SK-N-SH (cell line): ENCODE measurements at regions of chr5 and their contacts with region 1.

Region 1: DNA sequence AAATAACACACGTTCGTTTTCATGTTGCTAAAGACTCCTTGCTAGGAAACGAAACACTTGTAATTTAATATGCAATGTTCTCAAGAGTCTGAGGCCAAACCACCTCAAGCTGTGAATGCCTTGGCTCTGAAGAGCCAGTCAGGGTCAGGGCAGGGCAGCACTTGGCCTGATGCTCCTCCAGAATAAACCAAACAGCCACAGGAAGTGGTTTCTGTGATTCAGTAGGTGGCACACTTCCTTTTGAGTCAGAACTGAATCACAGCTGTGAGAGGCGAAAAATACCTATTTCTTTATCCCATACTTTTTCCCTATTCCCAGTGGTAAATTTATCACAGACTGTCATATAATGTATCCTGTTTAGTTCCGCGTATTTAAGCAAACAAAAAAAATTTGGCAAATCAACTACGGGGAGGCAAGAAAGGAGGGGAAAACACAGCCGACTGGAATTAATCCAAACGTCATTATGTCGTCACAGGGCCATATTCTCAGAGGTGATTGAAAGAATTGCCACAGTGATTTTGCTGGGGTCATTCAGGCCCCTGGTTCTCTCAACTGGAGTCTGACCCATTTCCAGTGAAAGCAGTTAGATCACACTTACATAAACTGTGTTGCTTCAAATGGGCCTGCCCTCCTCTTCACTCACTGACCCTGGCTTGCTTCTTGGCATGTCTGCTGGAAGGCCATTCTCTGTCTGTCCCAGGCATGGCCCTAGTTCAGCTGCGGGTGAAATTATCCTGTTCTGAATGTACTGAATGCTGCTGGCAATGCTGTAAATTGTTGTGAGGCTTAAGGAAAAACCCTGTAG is 71.2 kb downstream of the ARRDC3 start:
- DNase-seq: peak; percentile 27
- H3K4me3 ChIP-seq: peak overlapping the region in 1 of 2 experiments; percentile 13; a peak in 1 of 4 replicates
- H3K27ac ChIP-seq: peak overlapping the region; percentile 81 to 99
- H3K4me1 ChIP-seq: peaks cover 28 to 31% of the 10 kb centered on the region in 2 experiments; a peak in 3 of 4 replicates
- H3K27me3 ChIP-seq: no peaks in the 10 kb centered on the region
- CTCF ChIP-seq: no peak
- EP300 ChIP-seq: peak; percentile 59 to 99
- RAD21 ChIP-seq: peak; percentile 45

Region 2: DNA sequence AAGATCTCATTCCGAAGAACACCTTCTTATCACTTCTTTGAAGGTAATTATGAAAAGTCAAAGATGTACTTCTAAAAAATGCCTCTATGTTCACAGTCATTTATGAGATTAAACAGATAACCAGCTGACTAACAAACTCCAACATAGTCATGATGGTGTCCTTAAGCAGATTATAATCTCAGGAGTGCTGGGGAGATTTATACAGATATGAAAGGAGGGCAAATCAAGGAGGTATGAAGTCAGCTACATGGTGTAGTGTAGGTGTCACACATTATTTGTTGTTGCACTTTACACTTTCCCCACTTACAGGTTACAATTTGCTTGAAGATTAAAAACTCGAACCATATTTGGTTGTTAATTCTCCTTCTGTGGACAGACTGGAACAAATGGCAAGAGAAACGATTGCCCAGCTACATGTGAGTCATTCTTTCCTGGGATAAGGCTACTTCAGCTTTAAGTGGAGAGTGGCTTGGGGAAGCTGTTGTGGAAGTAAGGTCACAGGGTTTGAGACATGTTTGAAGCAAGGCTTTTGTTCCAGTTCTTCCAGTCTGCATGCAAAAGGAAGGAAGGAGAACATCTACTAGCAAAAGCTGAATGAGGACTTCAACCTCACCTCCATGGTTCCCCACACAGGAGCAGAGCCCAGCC is 433.2 kb before region 1 on chr5:
- CTCF ChIA-PET with region 1: no interaction called
- POLR2A ChIA-PET with region 1: no interaction called
- DNase-seq: no peak
- H3K4me3 ChIP-seq: no peak overlapping the region
- H3K27ac ChIP-seq: no peak overlapping the region
- H3K4me1 ChIP-seq: no peaks in the 10 kb centered on the region
- H3K27me3 ChIP-seq: 0 out of 2 replicates have a peak, but pooled peaks cover 5% of the 10 kb centered on the region
- CTCF ChIP-seq: no peak
- EP300 ChIP-seq: no peak
- RAD21 ChIP-seq: no peak

Region 3: GRCh38 chr5:91016954-91017700 is 294.8 kb before region 1 on chr5:
- CTCF ChIA-PET with region 1: no interaction called
- POLR2A ChIA-PET with region 1: no interaction called
- DNase-seq: no peak
- H3K4me3 ChIP-seq: no peak overlapping the region
- H3K27ac ChIP-seq: no peak overlapping the region
- H3K4me1 ChIP-seq: no peaks in the 10 kb centered on the region; a peak in 2 of 4 replicates
- H3K27me3 ChIP-seq: no peaks in the 10 kb centered on the region
- CTCF ChIP-seq: no peak
- EP300 ChIP-seq: no peak
- RAD21 ChIP-seq: no peak

Region 4: DNA sequence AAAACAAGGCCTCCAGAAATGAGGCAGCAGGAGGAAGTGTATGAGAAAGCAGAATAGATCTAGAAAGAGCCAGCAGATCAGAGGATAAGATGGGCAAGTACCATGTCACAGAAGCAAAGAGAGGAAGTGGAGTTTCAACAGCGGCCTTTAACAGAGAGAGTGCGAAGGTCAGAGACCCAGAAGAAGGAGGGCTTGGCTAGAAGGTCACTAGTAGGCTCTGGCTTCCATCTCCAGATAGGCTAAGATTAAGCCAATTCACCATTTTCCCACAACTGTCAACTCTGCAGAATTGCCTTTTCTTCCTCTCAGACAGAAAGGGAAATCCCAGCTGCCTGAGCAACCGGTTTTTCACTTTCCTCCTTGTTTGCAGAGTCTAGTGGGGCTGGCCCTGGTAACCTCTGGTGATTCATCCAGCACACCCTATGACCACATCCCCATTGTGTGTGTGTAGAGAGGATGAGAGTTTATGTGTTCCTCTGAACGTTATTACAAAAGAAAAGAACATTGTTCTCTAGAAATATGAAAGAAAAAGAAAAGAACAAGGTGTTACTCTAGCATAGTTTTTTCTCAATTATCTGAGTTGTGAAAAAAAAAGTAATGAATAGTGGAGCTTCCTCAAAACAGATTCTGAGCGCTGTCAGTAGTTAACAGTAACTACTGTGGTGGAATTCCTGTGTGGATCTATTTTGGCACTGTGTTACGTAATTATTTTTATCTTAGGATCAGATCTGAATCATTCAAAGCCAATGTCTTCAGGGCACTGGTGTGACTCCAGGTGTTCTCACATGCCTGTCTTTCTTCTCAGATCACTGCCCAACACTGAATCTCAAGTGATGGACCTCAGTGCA is 149.1 kb before region 1 on chr5:
- CTCF ChIA-PET with region 1: no interaction called
- POLR2A ChIA-PET with region 1: no interaction called
- DNase-seq: no peak
- H3K4me3 ChIP-seq: no peak overlapping the region
- H3K27ac ChIP-seq: peak overlapping the region; percentile 25 to 85; a peak in 3 of 4 replicates
- H3K4me1 ChIP-seq: peaks cover 2 to 17% of the 10 kb centered on the region in 2 experiments
- H3K27me3 ChIP-seq: no peaks in the 10 kb centered on the region
- CTCF ChIP-seq: no peak
- EP300 ChIP-seq: peak in 1 of 2 experiments; percentile 39; a peak in 1 of 4 replicates
- RAD21 ChIP-seq: no peak

Region 5: GRCh38 chr5:91288118-91288916 is 23.6 kb before region 1 on chr5:
- CTCF ChIA-PET with region 1: no interaction called
- POLR2A ChIA-PET with region 1: no interaction called
- DNase-seq: peak; percentile 30
- H3K4me3 ChIP-seq: no peak overlapping the region
- H3K27ac ChIP-seq: peak overlapping the region; percentile 75 to 83
- H3K4me1 ChIP-seq: peaks cover 6 to 17% of the 10 kb centered on the region in 2 experiments; a peak in 3 of 4 replicates
- H3K27me3 ChIP-seq: no peaks in the 10 kb centered on the region
- CTCF ChIP-seq: no peak
- EP300 ChIP-seq: peak in 1 of 2 experiments; percentile 54; a peak in 1 of 4 replicates
- RAD21 ChIP-seq: no peak

Region 6: DNA sequence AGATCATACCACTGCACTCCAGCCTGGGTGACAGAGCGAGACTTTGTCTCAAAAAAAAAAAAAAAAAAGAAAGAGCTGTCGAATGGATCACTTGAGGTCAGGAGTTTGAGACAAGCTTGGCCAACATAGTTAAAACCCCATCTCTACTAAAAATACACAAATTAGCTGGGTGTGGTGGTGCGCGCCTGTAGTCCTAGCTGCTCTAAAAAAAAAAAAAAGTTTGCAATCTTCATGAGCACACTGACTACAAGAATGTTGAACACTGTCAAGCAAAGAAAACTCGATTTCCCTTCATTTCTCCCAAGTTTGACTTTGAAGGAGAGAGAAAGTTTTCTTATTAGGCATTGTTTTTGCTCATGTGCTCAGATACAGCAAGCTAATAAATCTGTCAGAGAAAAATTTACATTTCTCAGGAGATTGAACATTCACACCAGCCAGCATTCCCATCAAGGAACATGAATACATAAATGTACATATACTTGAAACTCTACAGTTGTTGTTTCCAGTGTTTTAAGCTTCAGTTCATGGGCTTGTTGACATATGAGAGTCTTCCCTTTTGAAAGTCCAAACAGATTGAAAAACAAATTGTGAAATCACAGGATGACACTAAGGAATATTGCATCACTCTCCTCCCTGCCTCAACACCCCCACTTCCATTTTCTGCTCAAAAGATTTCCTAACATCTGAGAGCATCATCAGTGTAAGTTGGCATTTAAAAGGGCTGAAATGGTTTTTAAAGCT is 10.6 kb before region 1 on chr5:
- CTCF ChIA-PET with region 1: interaction called, 11 read pairs
- POLR2A ChIA-PET with region 1: no interaction called
- DNase-seq: no peak
- H3K4me3 ChIP-seq: no peak overlapping the region
- H3K27ac ChIP-seq: no peak overlapping the region
- H3K4me1 ChIP-seq: peaks cover 4 to 7% of the 10 kb centered on the region in 2 experiments; a peak in 1 of 4 replicates
- H3K27me3 ChIP-seq: no peaks in the 10 kb centered on the region
- CTCF ChIP-seq: no peak
- EP300 ChIP-seq: no peak
- RAD21 ChIP-seq: no peak